ENCODE measurements at regions of chr1 and their contacts with region 1.

Region 1: DNA sequence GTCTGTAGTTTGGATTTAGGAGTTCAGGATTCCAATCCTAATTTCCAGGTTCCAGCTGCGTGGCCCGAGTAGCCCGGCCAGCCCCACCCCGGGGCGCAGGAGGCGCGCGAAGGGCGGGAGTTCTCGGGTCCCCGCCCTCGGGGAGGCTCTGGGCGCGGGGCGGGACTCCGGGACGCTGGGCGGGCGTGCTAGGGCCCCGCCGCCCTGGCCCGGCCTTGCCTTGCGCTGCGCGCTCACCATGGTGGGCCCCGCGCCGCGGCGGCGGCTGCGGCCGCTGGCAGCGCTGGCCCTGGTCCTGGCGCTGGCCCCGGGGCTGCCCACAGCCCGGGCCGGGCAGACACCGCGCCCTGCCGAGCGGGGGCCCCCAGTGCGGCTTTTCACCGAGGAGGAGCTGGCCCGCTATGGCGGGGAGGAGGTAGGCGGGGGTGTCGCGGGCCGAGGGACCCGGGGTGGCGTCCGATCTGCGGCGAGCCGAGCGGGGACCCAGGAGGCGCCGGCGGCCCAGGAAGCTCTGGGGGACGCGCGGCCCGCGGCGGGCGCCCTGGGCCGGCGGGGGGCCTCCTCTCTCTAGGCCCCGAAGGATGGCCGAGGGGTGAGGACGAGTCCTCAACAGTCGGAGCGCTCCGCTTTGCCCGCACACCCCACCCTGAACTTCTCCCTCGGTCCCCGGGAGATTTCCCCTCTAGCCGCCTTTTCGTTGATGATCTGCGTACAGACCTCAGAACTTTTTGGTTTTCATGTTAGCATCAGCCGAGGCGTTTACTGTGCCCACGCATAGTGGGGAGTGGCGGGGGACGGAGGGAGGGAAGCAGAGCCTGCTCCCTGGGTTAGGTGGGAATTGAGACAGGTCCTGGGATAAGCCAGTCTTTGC is at the start of gene NENF:
- DNase-seq: peak; percentile 82
- H3K4me3 ChIP-seq: peak within 1 kb of the TSS; percentile 48 to 68 (median 56)
- H3K27ac ChIP-seq: peak within 1 kb of the TSS; percentile 71
- H3K4me1 ChIP-seq: peaks cover 9% of the 10 kb centered on the region
- H3K27me3 ChIP-seq: no peaks in the 10 kb centered on the region
- CTCF ChIP-seq: no peak
- total RNA-seq, gene NENF: 35.5 to 46.2 TPM

Region 2: DNA sequence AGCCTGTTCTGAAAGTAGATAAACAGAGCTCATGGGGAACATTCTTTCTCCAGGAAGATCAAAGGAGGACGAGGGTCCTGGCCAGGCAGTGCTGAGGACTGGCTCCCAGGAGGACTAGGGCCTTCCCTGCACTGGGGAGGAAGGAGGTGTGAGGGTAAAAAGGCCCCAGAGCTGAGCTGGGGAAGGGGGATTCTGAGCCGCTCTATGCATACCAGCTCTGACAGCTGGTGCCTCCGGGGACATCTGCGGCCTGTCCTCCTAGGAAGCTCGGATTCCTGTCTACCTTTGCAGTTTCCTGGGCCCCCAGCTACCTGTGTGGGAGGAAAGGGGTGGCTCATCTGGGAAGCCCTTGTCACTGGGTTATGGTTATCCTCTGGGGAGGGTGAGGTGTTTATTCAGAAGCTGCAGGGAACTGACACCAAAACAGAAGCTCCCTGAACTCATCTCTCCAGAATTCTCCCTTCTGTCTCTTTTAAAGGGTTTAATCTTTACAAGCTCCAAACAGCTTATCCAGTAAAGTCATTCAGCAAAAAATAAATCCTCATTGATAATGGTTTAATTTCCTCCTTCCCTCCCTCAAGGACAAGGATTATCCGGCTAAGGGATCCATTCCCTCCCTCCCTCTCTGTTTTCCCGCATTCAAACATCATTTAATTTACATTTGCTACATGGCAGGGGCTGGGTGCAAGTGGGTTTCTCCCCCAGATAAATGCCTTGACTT is 30.8 kb after region 1 on chr1:
- CTCF ChIA-PET with region 1: no interaction called
- dilution Hi-C with region 1: loop called (anchors 5 kb)
- in situ Hi-C with region 1: no loop called
- intact Hi-C with region 1: no loop called
- DNase-seq: no peak
- H3K4me3 ChIP-seq: no peak overlapping the region
- H3K27ac ChIP-seq: no peak overlapping the region
- H3K4me1 ChIP-seq: no peaks in the 10 kb centered on the region
- H3K27me3 ChIP-seq: no peaks in the 10 kb centered on the region
- CTCF ChIP-seq: no peak